Activated CD4-positive, alpha-beta T cell treated with anti-CD3 and anti-CD28 coated beads for 36 hours (primary cell): ENCODE measurements at regions of chr14 and their contacts with region 1.

Region 1: GRCh38 chr14:63470962-63471793 is 72.0 kb downstream of the PPP2R5E start:
- DNase-seq: no peak
- ATAC-seq: peak; percentile 87
- H3K4me3 Mint-ChIP-seq: no peak overlapping the region
- H3K27ac Mint-ChIP-seq: peak overlapping the region; percentile 55
- H3K4me1 Mint-ChIP-seq: peaks cover 59% of the 10 kb centered on the region
- H3K27me3 Mint-ChIP-seq: no peaks in the 10 kb centered on the region

Region 2: GRCh38 chr14:63308723-63309317 is 162.4 kb before region 1 on chr14:
- CTCF ChIA-PET with region 1: no interaction called
- POLR2A ChIA-PET with region 1: no interaction called
- intact Hi-C with region 1: no loop called
- DNase-seq: peak; percentile 28
- ATAC-seq: no peak
- H3K4me3 Mint-ChIP-seq: no peak overlapping the region
- H3K27ac Mint-ChIP-seq: no peak overlapping the region
- H3K4me1 Mint-ChIP-seq: no peaks in the 10 kb centered on the region
- H3K27me3 Mint-ChIP-seq: peaks cover 5% of the 10 kb centered on the region

Region 3: GRCh38 chr14:63543000-63543825 is 72.0 kb after region 1 on chr14 and contains the start of gene PPP2R5E:
- CTCF ChIA-PET with region 1: interaction called, 3 read pairs
- POLR2A ChIA-PET with region 1: no interaction called
- intact Hi-C with region 1: loop called (anchors 1 kb)
- DNase-seq: peak; percentile 98
- ATAC-seq: peak; percentile 99
- H3K4me3 Mint-ChIP-seq: peak within 1 kb of the TSS; percentile 86
- H3K27ac Mint-ChIP-seq: peak within 1 kb of the TSS; percentile 85
- H3K4me1 Mint-ChIP-seq: peaks cover 26% of the 10 kb centered on the region
- H3K27me3 Mint-ChIP-seq: no peaks in the 10 kb centered on the region
- total RNA-seq, gene PPP2R5E: 38.4 to 40.4 TPM